PC-9 (cell line): ENCODE measurements at regions of chr5 and their contacts with region 1.

Region 1: DNA sequence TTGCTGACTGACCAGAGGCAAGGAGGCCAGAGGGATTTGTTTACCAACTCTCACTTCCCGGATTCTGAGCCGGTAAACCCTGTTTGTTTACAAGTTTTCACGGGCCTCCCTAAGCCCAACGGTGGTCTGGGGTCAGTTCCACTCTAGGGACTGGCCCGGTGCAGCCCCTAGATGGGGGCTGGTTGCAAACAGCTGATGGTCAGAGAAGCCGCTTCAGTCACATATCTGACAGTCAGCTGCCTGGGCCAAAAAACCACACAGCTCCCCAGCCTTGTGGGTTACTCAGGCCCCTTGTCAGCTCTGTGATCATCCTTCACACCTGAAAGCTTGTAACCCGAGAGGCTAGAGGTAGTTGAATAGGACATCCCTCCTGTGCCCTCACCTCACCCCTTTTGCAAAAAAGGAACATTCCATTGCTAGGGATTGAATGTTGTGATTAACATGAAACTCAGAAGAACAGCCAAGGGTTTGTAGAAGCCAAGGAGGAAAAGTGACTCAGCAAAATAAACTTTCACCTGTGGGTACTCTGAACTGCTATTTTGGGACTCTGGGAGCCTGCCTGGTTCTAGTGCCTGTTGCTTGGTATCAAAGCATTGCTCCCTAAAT is 40.4 kb downstream of the SAR1B start:
- DNase-seq: peak; percentile 61 to 94
- H3K4me3 ChIP-seq: peak overlapping the region; percentile 8; the same call in 1 of the 2 replicates
- H3K27ac ChIP-seq: peak overlapping the region; percentile 82
- H3K4me1 ChIP-seq: peaks cover 34% of the 10 kb centered on the region
- H3K27me3 ChIP-seq: no peaks in the 10 kb centered on the region
- CTCF ChIP-seq: no peak

Region 2: DNA sequence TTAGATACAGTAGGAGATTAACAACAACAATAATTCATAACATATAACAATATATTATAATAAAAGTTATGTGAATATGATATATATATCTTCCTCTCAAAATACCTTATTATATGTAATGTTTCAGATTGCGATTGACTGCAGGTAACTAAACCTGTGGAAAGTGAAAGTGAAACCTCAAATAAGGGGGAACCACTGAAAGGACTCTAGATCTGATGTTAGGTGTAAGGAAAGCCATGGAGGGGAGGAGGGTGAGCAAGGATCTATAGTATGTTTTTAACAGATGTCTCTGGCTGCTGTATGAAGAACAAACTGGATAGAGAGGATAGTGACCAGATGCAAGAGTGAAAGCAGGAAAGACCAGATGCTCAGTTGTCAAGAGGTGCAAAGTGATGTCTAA is 974.1 kb before region 1 on chr5:
- CTCF ChIA-PET with region 1: no interaction called
- POLR2A ChIA-PET with region 1: no interaction called
- intact Hi-C with region 1: no loop called
- DNase-seq: no peak
- H3K4me3 ChIP-seq: no peak overlapping the region
- H3K27ac ChIP-seq: no peak overlapping the region
- H3K4me1 ChIP-seq: no peaks in the 10 kb centered on the region
- H3K27me3 ChIP-seq: no peaks in the 10 kb centered on the region
- CTCF ChIP-seq: no peak

Region 3: DNA sequence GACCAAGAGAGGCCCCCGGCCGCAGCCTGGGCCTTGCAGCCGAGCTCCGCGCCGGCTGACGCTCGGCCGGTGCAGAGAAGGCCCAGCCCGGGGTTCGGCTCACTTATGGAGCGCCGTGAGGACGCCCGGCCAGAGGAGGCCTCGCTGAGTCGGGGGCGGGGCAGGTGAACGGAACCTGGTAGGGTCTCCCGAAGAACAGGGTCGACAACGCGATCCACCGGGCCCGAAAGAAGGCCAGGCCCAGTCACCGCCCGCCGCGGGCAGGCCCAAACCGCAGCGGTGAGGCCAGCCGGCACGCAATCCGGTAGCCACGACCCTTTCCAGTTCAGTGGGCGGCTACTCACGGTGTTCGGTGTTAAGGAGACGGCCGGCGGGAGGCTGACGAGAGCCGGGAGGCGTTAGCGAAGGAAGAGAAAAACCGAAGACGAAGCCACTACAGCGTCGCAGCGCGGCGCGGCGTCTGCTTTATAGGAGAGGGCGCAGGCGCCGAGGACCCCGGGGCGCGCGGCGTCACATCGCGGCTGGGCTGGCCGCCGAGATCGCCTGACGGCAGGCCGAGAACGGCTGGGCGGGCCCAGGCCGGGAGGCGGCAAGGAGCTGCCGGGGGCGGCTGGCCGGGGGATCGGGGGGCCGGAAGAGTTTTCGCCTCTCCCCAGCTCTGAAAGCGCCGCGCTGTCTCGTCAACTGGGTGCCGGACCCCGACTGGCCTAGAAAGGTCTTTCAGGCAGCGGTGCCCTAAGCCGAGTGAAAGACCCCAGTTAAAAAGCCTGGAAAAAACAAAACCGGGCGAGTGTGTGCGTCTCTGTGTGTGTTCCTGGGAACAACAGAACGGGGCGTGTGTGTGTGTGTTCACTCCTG is 415.5 kb before region 1 on chr5 and contains the start of gene SKP1:
- CTCF ChIA-PET with region 1: no interaction called
- POLR2A ChIA-PET with region 1: interaction called, 8 read pairs
- intact Hi-C with region 1: loop called (anchors 5 kb)
- DNase-seq: peak; percentile 59 to 84
- H3K4me3 ChIP-seq: peak within 1 kb of the TSS; percentile 93
- H3K27ac ChIP-seq: peak within 1 kb of the TSS; percentile 93
- H3K4me1 ChIP-seq: peaks cover 23% of the 10 kb centered on the region
- H3K27me3 ChIP-seq: no peaks in the 10 kb centered on the region
- CTCF ChIP-seq: no peak
- total RNA-seq, gene SKP1: 335 and 409 TPM in 2 replicates

Region 4: DNA sequence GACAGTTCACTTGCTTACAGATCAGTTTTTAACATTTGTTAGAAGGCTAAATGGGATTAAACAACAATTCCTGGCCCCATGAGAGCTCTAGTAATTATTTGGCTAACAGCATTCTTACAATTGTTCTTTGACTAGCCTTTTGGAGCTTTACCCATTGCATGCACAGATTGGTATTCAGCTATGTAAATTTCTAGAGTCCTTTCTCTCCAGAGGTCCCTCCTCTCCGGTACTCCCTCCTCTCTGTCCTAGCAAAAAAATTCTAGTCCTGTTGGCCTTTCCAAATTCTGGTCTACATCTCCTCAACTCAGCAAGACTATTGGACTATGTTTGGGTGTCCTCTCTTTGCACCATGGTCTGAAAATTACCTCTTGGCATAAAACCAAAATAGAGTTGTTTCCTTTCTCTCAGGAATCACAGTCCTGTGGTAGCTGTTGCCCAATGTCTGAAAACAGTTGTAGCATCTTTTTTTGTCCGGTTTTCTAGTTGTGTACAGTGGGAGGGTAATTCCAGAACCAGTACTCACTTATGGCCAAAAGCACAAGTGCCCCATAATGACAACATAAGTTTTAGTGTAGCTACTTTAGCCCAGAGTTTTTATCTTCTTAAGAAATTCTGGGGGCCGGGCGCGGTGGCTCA is 22.3 kb after region 1 on chr5:
- CTCF ChIA-PET with region 1: no interaction called
- POLR2A ChIA-PET with region 1: no interaction called
- intact Hi-C with region 1: no loop called
- DNase-seq: no peak
- H3K4me3 ChIP-seq: no peak overlapping the region
- H3K27ac ChIP-seq: no peak overlapping the region
- H3K4me1 ChIP-seq: no peaks in the 10 kb centered on the region
- H3K27me3 ChIP-seq: no peaks in the 10 kb centered on the region
- CTCF ChIP-seq: no peak

Region 5: GRCh38 chr5:134648425-134649162 is 56.4 kb after region 1 on chr5 and contains the start of gene SEC24A:
- CTCF ChIA-PET with region 1: no interaction called
- POLR2A ChIA-PET with region 1: interaction called, 4 read pairs
- intact Hi-C with region 1: loop called (anchors 1 kb)
- DNase-seq: peak; percentile 84 to 90
- H3K4me3 ChIP-seq: peak within 1 kb of the TSS; percentile 96
- H3K27ac ChIP-seq: peak within 1 kb of the TSS; percentile 97
- H3K4me1 ChIP-seq: peaks cover 28% of the 10 kb centered on the region
- H3K27me3 ChIP-seq: no peaks in the 10 kb centered on the region
- CTCF ChIP-seq: no peak
- total RNA-seq, gene SEC24A: 10.4 and 16.2 TPM in 2 replicates

Region 6: DNA sequence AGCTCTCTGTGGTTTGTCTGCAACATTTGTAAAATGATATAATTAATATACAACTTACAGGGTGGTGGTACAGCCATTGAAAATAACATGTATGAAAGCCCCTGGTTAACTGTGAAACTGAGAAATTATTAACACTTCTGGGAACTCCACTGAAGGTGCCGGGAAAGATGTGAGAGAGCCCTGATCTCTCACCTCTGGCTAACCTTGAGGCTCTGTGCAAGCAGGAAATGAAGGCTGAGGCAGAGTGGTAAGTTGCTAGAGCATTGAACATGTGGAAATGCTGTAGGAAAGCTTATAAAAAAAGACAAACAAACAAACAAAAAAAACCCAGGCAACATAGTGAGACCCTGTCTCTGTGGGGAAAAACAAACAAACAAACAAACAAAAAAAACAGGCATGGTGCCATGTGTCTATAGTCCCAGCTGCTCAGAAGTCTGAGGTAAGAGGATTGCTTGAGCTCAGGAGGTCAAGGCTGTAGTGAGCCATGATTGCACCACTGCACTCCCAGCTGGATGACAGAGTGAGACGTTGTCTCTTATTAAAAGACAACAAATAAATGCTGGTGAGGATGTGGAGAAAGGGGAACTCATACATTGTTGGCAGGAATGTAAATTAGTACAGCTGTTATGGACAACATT is 383.0 kb after region 1 on chr5:
- CTCF ChIA-PET with region 1: no interaction called
- POLR2A ChIA-PET with region 1: no interaction called
- intact Hi-C with region 1: no loop called
- DNase-seq: no peak
- H3K4me3 ChIP-seq: no peak overlapping the region
- H3K27ac ChIP-seq: no peak overlapping the region
- H3K4me1 ChIP-seq: peaks cover 8% of the 10 kb centered on the region
- H3K27me3 ChIP-seq: no peaks in the 10 kb centered on the region
- CTCF ChIP-seq: no peak